Astrocyte of the spinal cord (primary cell): ENCODE measurements at regions of chr3 and their contacts with region 1.

Region 1: GRCh38 chr3:156674911-156675829 is 780 bp downstream of the TIPARP start:
- DNase-seq: peak; percentile 55
- H3K4me3 ChIP-seq: peak overlapping the region; percentile 84
- CTCF ChIP-seq: peak; percentile 36

Region 2: DNA sequence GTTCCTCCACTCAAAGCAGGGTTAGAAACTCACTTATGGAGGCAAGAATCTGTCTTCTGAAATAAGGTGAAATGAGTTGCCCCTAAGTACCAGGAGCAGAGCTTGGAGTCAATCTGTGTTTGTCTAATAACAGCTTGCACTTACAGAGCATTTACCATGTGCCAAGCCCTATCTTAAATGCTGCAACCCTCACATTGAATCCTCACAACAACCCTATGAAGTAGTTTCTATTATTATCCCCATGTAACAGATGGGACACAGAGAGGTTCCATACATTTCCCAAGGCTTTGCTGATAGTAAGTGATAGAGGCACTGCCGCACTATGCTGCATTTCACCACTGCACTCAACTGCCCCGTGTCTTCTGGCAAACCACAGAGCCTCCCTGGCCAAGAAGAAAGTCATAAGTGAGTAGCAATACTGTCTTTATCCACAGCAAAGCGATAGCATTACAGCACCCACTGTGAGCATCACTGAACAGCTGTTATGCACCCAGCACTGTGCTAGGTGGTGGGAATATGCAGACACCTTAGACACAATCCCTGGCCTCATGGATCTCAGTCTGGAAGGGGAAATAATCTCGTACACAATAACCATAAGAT is 261.8 kb before region 1 on chr3:
- in situ Hi-C with region 1: no loop called
- DNase-seq: no peak
- H3K4me3 ChIP-seq: no peak overlapping the region
- CTCF ChIP-seq: no peak

Region 3: DNA sequence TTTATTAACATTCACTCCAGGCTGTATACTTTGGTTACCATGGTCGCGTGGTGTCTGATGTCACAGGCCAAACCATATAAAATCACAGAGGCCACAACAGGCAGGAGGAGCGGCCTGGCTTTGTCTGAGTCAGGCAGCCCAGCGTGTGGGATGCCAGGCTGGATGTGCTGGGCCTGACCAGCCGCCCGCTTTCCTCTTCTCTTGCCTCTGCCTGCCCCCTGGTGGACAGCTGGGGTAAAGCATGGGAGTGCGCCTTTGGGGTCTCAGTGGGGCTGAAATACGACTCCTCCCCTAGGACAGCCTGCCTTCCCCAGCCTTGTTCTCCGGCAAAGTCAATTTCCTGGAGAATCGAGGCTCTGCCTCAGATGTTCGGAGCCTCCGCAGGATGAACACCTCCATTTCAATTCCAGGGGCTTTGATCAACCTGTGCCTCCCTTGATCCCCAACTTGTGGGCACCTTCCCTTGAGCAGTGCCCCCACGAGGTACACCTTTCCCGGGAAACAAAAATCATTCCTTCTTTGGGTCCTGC is 406.6 kb after region 1 on chr3:
- in situ Hi-C with region 1: loop called (anchors 25 kb)
- DNase-seq: peak; percentile 98
- H3K4me3 ChIP-seq: no peak overlapping the region
- CTCF ChIP-seq: peak; percentile 95

Region 4: DNA sequence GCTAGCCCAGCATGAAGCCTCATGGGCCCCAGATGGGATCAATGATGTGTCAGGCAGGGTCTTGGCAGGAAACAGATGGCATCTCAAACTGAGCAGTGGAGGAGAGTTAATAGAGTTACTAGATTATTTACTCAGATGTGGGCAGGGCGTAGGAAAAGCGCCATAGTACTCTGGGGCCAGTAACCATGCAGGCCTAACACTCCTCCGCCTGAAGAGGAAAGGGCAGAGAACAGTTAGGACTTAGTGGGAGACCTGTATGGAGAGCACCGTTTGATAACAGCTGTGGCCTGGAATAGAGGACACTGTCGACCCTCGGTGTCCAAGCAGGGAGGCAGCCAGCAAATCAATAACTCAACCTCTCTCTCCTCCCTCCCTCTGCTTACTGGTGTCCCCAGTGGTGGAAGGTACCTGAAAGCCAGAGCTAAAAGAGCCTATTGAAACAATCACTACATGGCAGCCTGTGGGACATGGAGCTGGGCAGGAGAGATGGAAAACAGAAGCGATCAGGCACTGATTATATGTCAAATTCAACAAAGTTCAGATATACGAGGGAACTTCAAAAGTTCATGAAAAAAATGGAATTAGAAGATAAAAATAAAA is 596.2 kb after region 1 on chr3:
- in situ Hi-C with region 1: no loop called
- DNase-seq: no peak
- H3K4me3 ChIP-seq: no peak overlapping the region
- CTCF ChIP-seq: no peak